T-cell (primary cell): ENCODE measurements at regions of chr15 and their contacts with region 1.

Region 1: GRCh38 chr15:50855092-50855396 is 53.4 kb upstream of the AP4E1 start:
- DNase-seq: no peak
- ATAC-seq: no peak
- H3K4me3 ChIP-seq: no peak overlapping the region
- H3K4me3 Mint-ChIP-seq: no peak overlapping the region
- H3K27ac ChIP-seq: no peak overlapping the region
- H3K27ac Mint-ChIP-seq: no peak overlapping the region
- H3K4me1 ChIP-seq: no peaks in the 10 kb centered on the region
- H3K4me1 Mint-ChIP-seq: no peaks in the 10 kb centered on the region
- H3K27me3 ChIP-seq: peaks cover 0 to 2% of the 10 kb centered on the region in 2 experiments
- H3K27me3 Mint-ChIP-seq: peaks cover 0 to 2% of the 10 kb centered on the region in 2 donors

Region 2: DNA sequence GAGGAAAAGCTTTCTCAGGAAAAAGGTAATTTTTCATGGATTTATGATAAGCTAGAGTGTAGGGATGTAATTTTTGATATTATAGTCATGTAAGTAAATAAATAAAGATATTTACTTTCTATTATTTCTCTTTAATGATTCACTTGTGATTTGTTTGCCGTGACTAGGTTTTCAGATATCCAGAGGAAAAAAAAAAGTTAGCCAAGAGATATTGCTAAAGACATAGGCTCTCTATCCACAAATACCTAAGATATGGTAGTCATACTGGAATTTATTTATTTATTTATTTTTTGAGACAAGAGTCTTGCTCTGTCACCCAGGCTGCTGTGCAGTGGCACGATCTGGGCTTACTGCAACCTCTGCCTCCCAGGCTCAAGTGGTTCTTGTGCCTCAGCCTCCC is 113.3 kb after region 1 on chr15:
- CTCF ChIA-PET with region 1: interaction called in 1 of 2 experiments, 10 read pairs
- POLR2A ChIA-PET with region 1: no interaction called
- DNase-seq: no peak
- ATAC-seq: no peak
- H3K4me3 ChIP-seq: no peak overlapping the region
- H3K4me3 Mint-ChIP-seq: no peak overlapping the region
- H3K27ac ChIP-seq: no peak overlapping the region
- H3K27ac Mint-ChIP-seq: no peak overlapping the region
- H3K4me1 ChIP-seq: no peaks in the 10 kb centered on the region
- H3K4me1 Mint-ChIP-seq: peaks cover 0 to 6% (median 1%) of the 10 kb centered on the region in 3 donors
- H3K27me3 ChIP-seq: no peaks in the 10 kb centered on the region
- H3K27me3 Mint-ChIP-seq: no peaks in the 10 kb centered on the region